Endothelial cell of umbilical vein (primary cell): ENCODE measurements at regions of chr1 and their contacts with region 1.

Region 1: DNA sequence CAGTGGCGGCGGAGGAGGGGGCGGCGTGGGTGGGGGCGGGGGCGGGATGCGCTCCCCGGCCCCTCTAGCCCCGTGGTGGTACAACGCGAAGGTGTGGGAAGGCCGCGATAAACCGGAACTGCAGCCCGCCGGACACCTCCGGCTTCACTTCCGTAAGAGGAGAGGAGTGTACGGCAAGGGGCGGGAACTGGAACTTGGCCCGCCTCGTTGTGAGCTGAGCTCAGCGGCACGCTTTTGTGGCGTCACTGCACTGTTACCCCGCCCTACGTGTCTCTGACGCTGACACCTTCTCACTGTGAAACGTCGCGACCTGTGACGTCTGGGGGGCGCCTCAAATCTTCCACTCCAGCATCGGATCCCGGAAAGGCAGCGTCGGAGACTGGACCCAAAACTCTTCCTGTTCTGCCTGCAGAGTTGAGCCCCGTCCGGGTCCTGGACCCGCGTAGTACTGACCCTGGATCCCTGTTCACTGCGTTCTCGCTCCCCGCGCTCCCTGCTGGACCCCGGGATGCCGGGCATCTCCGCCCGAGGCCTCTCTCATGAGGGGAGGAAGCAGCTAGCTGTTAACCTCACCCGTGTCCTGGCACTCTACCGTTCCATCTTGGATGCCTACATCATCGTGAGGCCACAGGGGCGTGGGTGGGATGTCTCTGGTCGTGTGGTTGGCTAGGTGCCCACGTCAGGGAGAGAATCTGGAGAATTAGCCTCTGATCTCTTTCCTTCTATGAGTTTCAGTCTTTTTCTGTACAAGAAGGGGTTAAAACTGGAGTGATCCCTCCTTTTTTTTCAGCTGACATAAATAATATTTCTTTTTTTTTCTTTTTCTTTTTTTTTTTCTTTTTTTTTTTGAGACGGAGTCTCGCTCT is at the start of gene ISG20L2:
- DNase-seq: peak; percentile 96
- H3K4me3 ChIP-seq: peak within 1 kb of the TSS; percentile 56 to 94 (median 79)
- H3K27ac ChIP-seq: peak within 1 kb of the TSS; percentile 83
- H3K4me1 ChIP-seq: peaks cover 32% of the 10 kb centered on the region
- H3K27me3 ChIP-seq: no peaks in the 10 kb centered on the region
- CTCF ChIP-seq: no peak
- POLR2A ChIP-seq: peak; percentile 75
- total RNA-seq, gene ISG20L2: 32.1 and 35.3 TPM in 2 replicates

Region 2: GRCh38 chr1:156435545-156436141 is 293.2 kb before region 1 on chr1:
- CTCF ChIA-PET with region 1: no interaction called
- POLR2A ChIA-PET with region 1: no interaction called
- dilution Hi-C with region 1: no loop called
- intact Hi-C with region 1: no loop called
- DNase-seq: no peak
- H3K4me3 ChIP-seq: peak overlapping the region in 1 of 3 experiments; percentile 30
- H3K27ac ChIP-seq: no peak overlapping the region
- H3K4me1 ChIP-seq: peaks cover 4% of the 10 kb centered on the region
- H3K27me3 ChIP-seq: peaks cover 92 to 97% of the 10 kb centered on the region in 2 experiments
- CTCF ChIP-seq: no peak
- POLR2A ChIP-seq: no peak

Region 3: GRCh38 chr1:156659994-156660751 is 68.7 kb before region 1 on chr1:
- CTCF ChIA-PET with region 1: interaction called, 31 read pairs
- POLR2A ChIA-PET with region 1: interaction called, 3 read pairs
- dilution Hi-C with region 1: no loop called
- intact Hi-C with region 1: loop called (anchors 1 kb)
- DNase-seq: peak; percentile 96
- H3K4me3 ChIP-seq: peak overlapping the region in 1 of 3 experiments; percentile 59
- H3K27ac ChIP-seq: peak overlapping the region; percentile 85
- H3K4me1 ChIP-seq: peaks cover 67% of the 10 kb centered on the region
- H3K27me3 ChIP-seq: peaks cover 3 to 9% of the 10 kb centered on the region in 2 experiments
- CTCF ChIP-seq: peak; percentile 100
- POLR2A ChIP-seq: peak; percentile 83

Region 4: DNA sequence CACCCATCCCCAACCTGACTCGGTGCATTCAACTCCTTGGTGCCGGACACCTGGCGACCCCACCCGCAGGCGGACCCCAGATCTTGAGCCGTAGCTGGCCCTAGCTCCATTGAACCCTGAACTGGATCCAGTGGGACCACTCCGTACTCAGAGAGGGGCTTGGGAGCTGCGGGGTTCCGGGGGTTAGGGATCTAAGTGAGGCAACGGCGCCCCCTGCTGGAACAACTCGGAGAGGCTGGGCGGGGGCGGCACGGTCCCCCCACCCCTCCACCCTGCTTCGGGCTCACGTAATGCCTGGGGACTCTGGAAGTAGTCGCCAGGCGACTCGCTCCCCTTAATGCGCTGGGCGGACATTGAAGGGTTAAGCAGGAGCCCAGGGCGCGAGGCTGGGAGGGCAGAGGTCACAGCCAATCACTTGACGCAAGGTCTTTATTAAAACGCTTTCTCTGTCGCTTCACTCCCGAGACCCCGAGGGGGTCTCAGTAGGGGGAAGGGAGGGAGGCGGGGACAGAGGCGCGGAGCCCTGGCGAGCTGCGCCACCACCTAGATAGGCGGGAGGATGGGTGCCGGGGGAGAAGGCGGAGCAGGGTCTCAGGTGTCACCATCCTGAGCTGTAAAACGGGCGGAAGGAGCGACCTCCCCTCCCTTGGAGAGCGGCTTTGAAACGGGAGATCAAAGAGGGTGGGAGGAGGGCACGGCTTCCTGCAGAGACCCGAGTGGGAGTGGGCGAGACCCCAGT is 22.7 kb before region 1 on chr1:
- CTCF ChIA-PET with region 1: interaction called, 82 read pairs
- POLR2A ChIA-PET with region 1: no interaction called
- dilution Hi-C with region 1: no loop called
- intact Hi-C with region 1: loop called (anchors 1 kb)
- DNase-seq: peak; percentile 57
- H3K4me3 ChIP-seq: peak overlapping the region in 1 of 3 experiments; percentile 4
- H3K27ac ChIP-seq: no peak overlapping the region
- H3K4me1 ChIP-seq: peaks cover 19% of the 10 kb centered on the region
- H3K27me3 ChIP-seq: peaks cover 0 to 3% of the 10 kb centered on the region in 2 experiments
- CTCF ChIP-seq: peak; percentile 76 to 87
- POLR2A ChIP-seq: no peak

Region 5: GRCh38 chr1:156767101-156767878 is 38.5 kb after region 1 on chr1 and contains the start of gene PRCC:
- CTCF ChIA-PET with region 1: interaction called, 52 read pairs
- POLR2A ChIA-PET with region 1: interaction called, 7 read pairs
- dilution Hi-C with region 1: no loop called
- intact Hi-C with region 1: loop called (anchors 1 kb)
- DNase-seq: peak; percentile 100
- H3K4me3 ChIP-seq: peak within 1 kb of the TSS; percentile 65 to 91 (median 74)
- H3K27ac ChIP-seq: peak within 1 kb of the TSS; percentile 80
- H3K4me1 ChIP-seq: peaks cover 18% of the 10 kb centered on the region
- H3K27me3 ChIP-seq: no peaks in the 10 kb centered on the region
- CTCF ChIP-seq: no peak
- POLR2A ChIP-seq: no peak
- total RNA-seq, gene PRCC: 65.1 and 71.5 TPM in 2 replicates

Region 6: DNA sequence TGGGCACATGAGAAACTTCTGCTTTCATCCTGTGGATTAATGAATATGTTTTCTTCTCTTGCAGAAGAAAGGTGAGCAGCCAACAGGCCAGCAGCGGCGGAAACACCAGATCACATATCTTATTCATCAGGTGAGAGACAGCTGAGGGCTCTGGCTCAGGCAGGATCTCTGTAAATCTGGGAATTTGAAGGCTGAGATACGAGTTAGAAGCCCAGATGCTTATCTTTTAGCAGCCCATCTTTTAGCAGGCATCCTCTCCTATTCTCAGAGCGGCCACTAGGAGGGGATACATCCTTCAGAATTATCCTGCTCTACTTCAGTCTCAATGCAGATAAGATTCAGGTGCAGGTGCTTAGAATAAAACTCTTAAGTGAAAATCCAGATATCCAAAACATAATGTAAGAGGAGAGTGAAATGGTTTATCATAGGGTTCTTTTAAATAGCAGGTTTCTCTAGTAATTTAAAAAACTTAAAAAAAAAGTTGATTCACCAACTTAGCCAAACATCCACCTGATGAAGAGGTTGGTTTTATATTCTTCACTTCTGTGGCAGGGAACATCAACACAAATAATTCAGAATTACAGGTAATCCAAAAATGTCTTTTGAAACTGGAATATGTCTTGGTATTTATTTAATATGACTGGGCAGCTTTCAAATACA is 68.5 kb after region 1 on chr1:
- CTCF ChIA-PET with region 1: interaction called, 45 read pairs
- POLR2A ChIA-PET with region 1: no interaction called
- dilution Hi-C with region 1: no loop called
- intact Hi-C with region 1: loop called (anchors 1 kb)
- DNase-seq: peak; percentile 75
- H3K4me3 ChIP-seq: no peak overlapping the region
- H3K27ac ChIP-seq: no peak overlapping the region
- H3K4me1 ChIP-seq: no peaks in the 10 kb centered on the region
- H3K27me3 ChIP-seq: no peaks in the 10 kb centered on the region
- CTCF ChIP-seq: peak; percentile 61 to 72
- POLR2A ChIP-seq: no peak

Region 7: DNA sequence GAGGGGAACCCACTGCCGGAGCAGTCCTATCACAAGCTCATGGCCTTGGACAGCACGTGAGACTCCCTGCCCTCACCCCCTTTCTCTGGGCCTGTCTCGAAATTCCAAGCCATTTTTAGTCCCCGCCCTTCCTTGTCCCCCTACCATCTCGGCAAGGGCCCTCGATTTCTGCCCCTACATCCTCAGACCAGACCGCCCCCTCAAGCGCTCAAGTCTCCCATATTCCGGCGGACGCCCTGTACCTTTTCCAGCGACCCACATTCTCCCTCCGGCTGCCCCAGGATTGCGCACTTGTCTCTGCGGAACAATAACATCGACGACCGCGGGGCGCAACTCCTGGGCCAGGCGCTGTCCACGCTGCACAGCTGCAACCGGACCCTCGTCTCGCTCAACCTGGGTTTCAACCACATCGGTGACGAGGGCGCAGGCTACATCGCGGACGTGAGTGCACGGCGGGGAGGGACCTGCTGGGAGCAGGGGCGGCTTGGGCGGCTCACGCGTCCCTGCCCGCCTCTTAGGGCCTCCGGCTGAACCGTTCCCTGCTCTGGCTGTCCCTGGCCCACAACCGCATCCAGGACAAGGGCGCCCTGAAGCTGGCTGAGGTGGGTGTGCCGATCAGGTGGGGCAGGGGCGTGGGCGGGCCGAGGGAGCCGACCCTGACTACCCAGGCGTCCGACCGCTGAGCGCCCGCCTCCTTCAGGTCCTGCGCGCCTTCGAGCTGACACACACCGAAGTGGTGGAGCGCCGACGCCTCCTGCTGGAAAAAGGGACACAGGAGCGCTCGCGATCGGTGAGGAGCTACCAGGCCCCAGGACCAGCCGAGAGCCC is 198.6 kb after region 1 on chr1:
- CTCF ChIA-PET with region 1: interaction called, 90 read pairs
- POLR2A ChIA-PET with region 1: no interaction called
- dilution Hi-C with region 1: no loop called
- intact Hi-C with region 1: loop called (anchors 1 kb)
- DNase-seq: peak; percentile 79
- H3K4me3 ChIP-seq: peak overlapping the region in 1 of 3 experiments; percentile 17
- H3K27ac ChIP-seq: no peak overlapping the region
- H3K4me1 ChIP-seq: peaks cover 2% of the 10 kb centered on the region
- H3K27me3 ChIP-seq: peaks cover 17 to 25% of the 10 kb centered on the region in 2 experiments
- CTCF ChIP-seq: peak; percentile 82 to 93
- POLR2A ChIP-seq: no peak